ENCODE measurements at regions of chr2 and their contacts with region 1.

Region 1: DNA sequence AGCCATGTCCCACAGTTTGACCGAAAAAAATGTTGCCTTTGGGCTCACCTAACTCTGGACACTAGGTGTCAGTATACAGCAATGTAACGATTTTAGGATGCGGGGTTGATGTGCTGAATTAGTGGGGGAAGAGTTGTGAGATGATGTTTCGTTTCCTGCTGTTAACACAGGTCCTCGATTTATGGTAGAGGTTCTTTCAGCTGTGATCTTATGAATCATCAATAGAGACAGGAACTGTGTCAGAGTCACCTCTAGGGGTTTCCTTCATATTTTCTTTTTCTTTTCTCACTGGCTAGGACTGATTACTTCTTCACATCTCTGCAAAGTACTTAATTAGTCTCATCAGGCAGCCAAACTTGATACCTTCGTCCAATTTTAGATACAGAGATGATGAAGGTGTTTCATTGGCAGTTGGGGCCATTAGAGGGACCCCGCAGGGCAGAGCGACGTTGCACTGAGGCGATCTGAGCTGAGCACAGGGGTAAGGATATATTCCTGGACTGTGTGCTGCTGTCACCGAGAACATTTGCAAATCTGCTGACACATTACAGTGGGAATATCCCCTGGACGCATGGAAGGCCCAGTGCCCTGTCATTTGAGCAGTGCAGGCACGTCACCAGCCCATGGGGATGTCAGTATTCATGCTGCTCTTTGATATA is 10.2 kb upstream of the MMADHC start:
- DNase-seq: peak; percentile 66
- ATAC-seq: peak; percentile 92
- H3K4me3 ChIP-seq: peak overlapping the region; percentile 7 to 36; a peak in 3 of 4 replicates
- H3K27ac ChIP-seq: peak overlapping the region; percentile 76
- H3K4me1 ChIP-seq: peaks cover 6% of the 10 kb centered on the region
- H3K27me3 ChIP-seq: no peaks in the 10 kb centered on the region
- CTCF ChIP-seq: peak; percentile 82

Region 2: GRCh38 chr2:149715005-149715592 is 117.3 kb after region 1 on chr2:
- CTCF ChIA-PET with region 1: no interaction called
- POLR2A ChIA-PET with region 1: no interaction called
- in situ Hi-C with region 1: no loop called
- intact Hi-C with region 1: loop called (anchors 5 kb)
- DNase-seq: peak; percentile 15
- ATAC-seq: peak; percentile 76
- H3K4me3 ChIP-seq: no peak overlapping the region
- H3K27ac ChIP-seq: peak overlapping the region; percentile 39; the same call in 1 of the 2 replicates
- H3K4me1 ChIP-seq: 0 out of 2 replicates have a peak, but pooled peaks cover 2% of the 10 kb centered on the region
- H3K27me3 ChIP-seq: no peaks in the 10 kb centered on the region
- CTCF ChIP-seq: peak; percentile 78

Region 3: DNA sequence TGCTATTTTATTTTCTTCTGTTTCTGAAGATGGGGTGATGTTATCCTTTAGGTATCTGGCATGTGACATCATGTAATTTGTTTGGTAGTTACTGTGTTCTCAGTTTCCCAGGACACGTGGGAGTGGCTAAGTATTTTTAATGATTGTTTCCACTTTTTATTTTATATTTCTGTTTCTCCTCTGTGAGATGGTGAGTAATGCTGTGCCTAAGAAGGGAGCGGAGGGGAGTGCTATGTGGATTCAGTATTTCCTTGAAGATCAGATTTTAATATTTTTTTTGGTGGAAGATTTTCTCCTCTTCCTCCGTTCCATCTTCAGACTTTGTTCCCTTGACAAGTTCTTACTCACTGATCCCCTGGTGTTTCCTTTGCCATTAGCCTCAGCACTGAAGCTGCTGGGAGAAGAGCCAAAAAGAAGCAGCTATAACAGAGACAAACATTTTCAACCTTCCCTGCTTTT is 169.7 kb after region 1 on chr2:
- CTCF ChIA-PET with region 1: no interaction called
- POLR2A ChIA-PET with region 1: no interaction called
- in situ Hi-C with region 1: no loop called
- intact Hi-C with region 1: loop called (anchors 5 kb)
- DNase-seq: no peak
- ATAC-seq: 0 out of 2 replicates have a peak, but pooled peaks have one; percentile 57
- H3K4me3 ChIP-seq: no peak overlapping the region; a peak in 1 of 4 replicates
- H3K27ac ChIP-seq: peak overlapping the region; percentile 88
- H3K4me1 ChIP-seq: peaks cover 25% of the 10 kb centered on the region
- H3K27me3 ChIP-seq: no peaks in the 10 kb centered on the region
- CTCF ChIP-seq: no peak

Region 4: GRCh38 chr2:150478200-150478974 is 880.6 kb after region 1 on chr2:
- CTCF ChIA-PET with region 1: no interaction called
- POLR2A ChIA-PET with region 1: interaction called, 3 read pairs
- in situ Hi-C with region 1: no loop called
- intact Hi-C with region 1: loop called (anchors 5 kb)
- DNase-seq: no peak
- ATAC-seq: peak; percentile 47; the same call in 1 of the 2 replicates
- H3K4me3 ChIP-seq: peak overlapping the region in 1 of 2 experiments; percentile 19; a peak in 1 of 4 replicates
- H3K27ac ChIP-seq: peak overlapping the region; percentile 77
- H3K4me1 ChIP-seq: peaks cover 87% of the 10 kb centered on the region
- H3K27me3 ChIP-seq: no peaks in the 10 kb centered on the region
- CTCF ChIP-seq: no peak

Region 5: GRCh38 chr2:151051574-151052220 is 1453.9 kb after region 1 on chr2:
- CTCF ChIA-PET with region 1: no interaction called
- POLR2A ChIA-PET with region 1: no interaction called
- in situ Hi-C with region 1: no loop called
- intact Hi-C with region 1: loop called (anchors 2 kb)
- DNase-seq: peak; percentile 55
- ATAC-seq: 0 out of 2 replicates have a peak, but pooled peaks have one; percentile 65
- H3K4me3 ChIP-seq: no peak overlapping the region
- H3K27ac ChIP-seq: no peak overlapping the region
- H3K4me1 ChIP-seq: no peaks in the 10 kb centered on the region
- H3K27me3 ChIP-seq: no peaks in the 10 kb centered on the region
- CTCF ChIP-seq: peak; percentile 77; the same call in 1 of the 2 replicates

Region 6: GRCh38 chr2:151238527-151239487 is 1641.0 kb after region 1 on chr2:
- CTCF ChIA-PET with region 1: no interaction called
- POLR2A ChIA-PET with region 1: no interaction called
- in situ Hi-C with region 1: no loop called
- intact Hi-C with region 1: loop called (anchors 2 kb)
- DNase-seq: no peak
- ATAC-seq: peak; percentile 81
- H3K4me3 ChIP-seq: no peak overlapping the region
- H3K27ac ChIP-seq: peak overlapping the region; percentile 15; the same call in 1 of the 2 replicates
- H3K4me1 ChIP-seq: peaks cover 6% of the 10 kb centered on the region; the same call in 1 of the 2 replicates
- H3K27me3 ChIP-seq: no peaks in the 10 kb centered on the region
- CTCF ChIP-seq: peak; percentile 89